Activated CD4-positive, alpha-beta memory T cell treated with anti-CD3 and anti-CD28 coated beads, Interleukin-2, amount 10 ng/mL, durations not matched to agents 7 days and 5 days (primary cell): ENCODE measurements at regions of chr22 and their contacts with region 1.

Region 1: DNA sequence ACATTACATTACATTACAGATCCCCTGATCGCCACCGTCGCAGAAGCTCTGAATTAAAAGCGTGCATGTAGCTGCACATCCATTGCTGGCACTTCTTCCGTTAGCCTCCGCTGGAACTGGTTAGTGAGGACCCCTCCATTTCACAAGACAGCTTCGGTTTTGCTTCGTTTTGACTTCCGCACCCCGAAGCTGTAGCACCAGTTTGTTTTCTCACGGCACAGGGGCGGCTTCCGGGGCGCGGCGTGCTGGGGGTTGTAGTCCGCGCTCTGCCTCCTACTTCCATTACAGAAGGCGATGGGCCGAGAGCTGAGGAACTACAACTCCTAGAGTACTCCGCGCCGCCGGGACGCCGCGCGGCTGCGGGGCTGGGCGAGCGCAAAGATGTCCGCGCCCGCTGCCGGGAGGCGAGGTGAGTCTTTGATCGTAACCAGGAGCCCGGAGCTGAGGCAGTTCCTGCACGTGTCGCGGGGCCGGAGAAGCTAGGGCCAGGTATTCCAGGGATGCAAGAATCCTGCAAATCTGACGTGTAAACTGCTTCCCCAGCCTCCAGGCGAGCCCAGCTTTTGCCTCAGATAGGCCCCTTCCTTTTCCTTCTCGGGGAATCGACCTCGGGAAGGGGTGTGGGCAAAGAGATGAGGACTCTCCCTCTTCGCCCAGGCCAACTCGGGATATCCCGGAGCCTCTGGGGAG is at the start of gene PEX26:
- DNase-seq: peak; percentile 97
- H3K4me3 Mint-ChIP-seq: peak within 1 kb of the TSS; percentile 93
- H3K27ac Mint-ChIP-seq: peak within 1 kb of the TSS; percentile 93
- H3K4me1 Mint-ChIP-seq: peaks cover 54% of the 10 kb centered on the region
- H3K27me3 Mint-ChIP-seq: no peaks in the 10 kb centered on the region
- total RNA-seq, gene PEX26: 35.5 to 35.9 TPM

Region 2: DNA sequence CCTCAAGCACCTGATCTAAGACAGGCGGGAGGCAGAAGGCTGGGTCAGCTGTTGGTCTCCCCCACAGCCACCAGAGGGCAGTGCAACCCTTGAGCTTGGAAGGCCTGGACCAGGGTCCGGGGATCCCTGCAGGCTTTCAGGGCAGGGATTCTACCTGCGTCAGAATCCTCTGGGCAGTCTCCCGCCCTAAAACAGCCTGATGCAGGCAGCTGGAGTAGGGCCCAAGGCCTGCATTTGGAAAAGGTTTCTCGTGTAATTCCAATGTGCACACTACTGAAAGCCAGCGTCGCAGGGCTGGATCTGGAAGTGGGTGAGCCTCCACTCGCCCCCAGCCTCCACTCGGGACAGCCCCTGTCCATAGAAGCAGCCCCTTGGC is 335.3 kb before region 1 on chr22:
- CTCF ChIA-PET with region 1: interaction called, 12 read pairs
- POLR2A ChIA-PET with region 1: interaction called, 5 read pairs
- DNase-seq: peak; percentile 66
- H3K4me3 Mint-ChIP-seq: no peak overlapping the region
- H3K27ac Mint-ChIP-seq: no peak overlapping the region
- H3K4me1 Mint-ChIP-seq: no peaks in the 10 kb centered on the region
- H3K27me3 Mint-ChIP-seq: no peaks in the 10 kb centered on the region

Region 3: DNA sequence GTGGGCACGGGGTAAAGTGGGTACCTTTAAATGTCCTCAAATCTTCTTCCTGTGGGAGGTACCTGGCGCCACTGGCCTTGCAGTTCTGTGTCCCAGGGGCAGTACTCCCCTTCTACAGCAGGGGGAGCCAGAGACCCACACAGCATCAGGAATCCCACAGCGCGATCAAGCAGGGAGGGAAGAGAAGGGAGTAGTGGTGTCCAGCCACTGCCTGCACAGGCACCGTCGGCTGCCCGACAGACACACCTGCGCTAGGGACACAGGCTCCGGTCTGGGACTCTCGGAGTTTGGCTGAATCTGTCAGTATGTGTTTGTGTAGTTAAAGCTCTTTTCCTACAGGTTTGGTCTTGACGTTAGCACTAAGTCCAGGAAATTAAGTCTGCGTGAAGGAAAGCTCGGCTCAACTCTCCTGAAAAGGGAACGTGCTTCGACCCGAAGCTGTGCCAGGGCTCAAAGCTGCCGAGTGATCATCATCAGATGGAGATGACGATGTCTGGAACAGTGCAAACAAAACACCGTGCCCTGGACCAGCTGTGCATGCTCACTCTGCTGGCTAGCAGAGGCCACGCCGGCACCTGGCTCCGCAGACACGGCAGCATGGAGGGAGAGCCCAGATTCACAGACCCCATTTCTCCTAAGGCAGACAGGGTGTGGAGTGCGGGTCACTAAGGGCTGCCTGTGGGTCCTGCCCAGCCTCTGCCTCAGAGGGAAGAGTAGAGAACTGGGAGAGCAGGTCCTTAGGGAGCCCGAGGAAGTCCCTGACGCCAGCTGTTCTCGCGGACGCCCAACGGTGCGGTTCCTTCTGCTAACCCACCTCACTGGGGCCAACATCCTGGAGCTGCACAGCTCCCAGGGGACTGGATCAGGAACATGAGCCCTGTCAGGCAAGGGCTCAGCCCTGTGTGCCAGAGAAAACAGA is 247.5 kb before region 1 on chr22:
- CTCF ChIA-PET with region 1: interaction called, 89 read pairs
- POLR2A ChIA-PET with region 1: interaction called, 9 read pairs
- DNase-seq: peak; percentile 86
- H3K4me3 Mint-ChIP-seq: no peak overlapping the region
- H3K27ac Mint-ChIP-seq: no peak overlapping the region
- H3K4me1 Mint-ChIP-seq: no peaks in the 10 kb centered on the region
- H3K27me3 Mint-ChIP-seq: no peaks in the 10 kb centered on the region

Region 4: DNA sequence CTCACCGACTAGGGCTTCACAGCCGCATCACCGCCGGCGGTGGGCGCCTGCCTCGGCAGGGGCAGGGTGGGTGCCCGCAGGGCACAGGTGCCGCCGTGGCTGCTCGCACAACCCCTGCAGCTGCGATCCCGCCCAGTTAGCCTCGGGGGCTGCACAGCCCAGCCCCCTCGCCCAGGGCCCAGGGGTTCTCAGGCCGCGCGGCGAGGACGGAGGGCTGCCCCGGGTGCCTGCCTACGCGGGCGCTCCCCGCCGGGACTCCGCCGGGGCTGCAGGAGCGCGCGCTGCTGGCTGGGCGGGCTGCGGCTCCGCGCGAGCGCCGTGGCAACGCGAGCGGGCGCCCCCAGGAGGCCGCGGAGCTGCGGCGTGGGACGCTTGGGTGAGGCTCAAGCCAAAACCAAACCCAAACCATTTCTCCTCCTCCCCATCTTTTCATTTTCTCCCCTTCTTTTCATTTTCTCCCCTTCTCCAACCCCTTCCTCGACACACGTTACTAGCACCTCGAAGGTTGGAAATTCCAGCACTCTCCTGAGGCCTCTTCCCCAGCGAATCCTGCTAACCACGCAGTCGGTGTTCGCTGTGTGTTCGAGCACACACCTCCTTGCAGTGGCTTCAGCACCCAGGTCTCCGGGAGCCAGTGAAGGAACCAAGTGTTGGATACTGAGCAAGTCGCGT is 53.4 kb before region 1 on chr22 and contains the start of gene MICAL3:
- CTCF ChIA-PET with region 1: interaction called, 12 read pairs
- POLR2A ChIA-PET with region 1: interaction called, 5 read pairs
- DNase-seq: peak; percentile 71
- H3K4me3 Mint-ChIP-seq: peak within 1 kb of the TSS; percentile 80
- H3K27ac Mint-ChIP-seq: no peak within 1 kb of the TSS
- H3K4me1 Mint-ChIP-seq: peaks cover 15% of the 10 kb centered on the region
- H3K27me3 Mint-ChIP-seq: peaks cover 64% of the 10 kb centered on the region
- total RNA-seq, gene MICAL3: 30.3 to 31.4 TPM

Region 5: DNA sequence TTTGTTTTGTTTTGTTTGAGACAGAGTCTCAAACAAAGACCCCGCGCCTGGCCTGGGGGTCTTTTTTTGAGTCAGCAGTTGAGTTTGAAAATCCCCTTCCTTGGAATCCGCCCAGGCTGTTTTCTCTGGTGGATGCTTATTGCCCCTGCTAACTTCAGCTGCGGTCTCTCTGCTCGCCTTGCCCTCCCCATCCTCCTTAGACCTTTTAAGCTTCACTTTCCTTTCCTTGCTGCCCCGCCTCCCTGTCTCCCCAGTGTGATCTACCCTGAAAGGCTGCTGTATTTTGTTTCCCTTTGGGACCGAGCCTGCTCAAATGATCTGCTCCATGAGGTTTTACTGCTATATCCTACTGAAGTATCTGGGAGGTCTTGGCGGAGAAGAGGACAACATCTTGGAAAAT is 74.7 kb after region 1 on chr22:
- CTCF ChIA-PET with region 1: interaction called, 8 read pairs
- POLR2A ChIA-PET with region 1: interaction called, 63 read pairs
- DNase-seq: peak; percentile 51
- H3K4me3 Mint-ChIP-seq: peak overlapping the region; percentile 93
- H3K27ac Mint-ChIP-seq: peak overlapping the region; percentile 48
- H3K4me1 Mint-ChIP-seq: peaks cover 70% of the 10 kb centered on the region
- H3K27me3 Mint-ChIP-seq: no peaks in the 10 kb centered on the region